ENCODE measurements at regions of chr5 and their contacts with region 1.

Region 1: GRCh38 chr5:169583424-169584204 is at the start of gene SPDL1:
- DNase-seq: peak; percentile 98
- H3K4me3 ChIP-seq: peak within 1 kb of the TSS; percentile 48 to 96 (median 92)
- H3K27ac ChIP-seq: peak within 1 kb of the TSS; percentile 52
- H3K4me1 ChIP-seq: peaks cover 24% of the 10 kb centered on the region
- H3K27me3 ChIP-seq: peaks cover 0 to 4% of the 10 kb centered on the region in 2 experiments
- CTCF ChIP-seq: no peak
- POLR2A ChIP-seq: peak; percentile 92
- total RNA-seq, gene SPDL1: 46.8 and 51.8 TPM in 2 replicates

Region 2: GRCh38 chr5:168268949-168269943 is 1314.4 kb before region 1 on chr5:
- CTCF ChIA-PET with region 1: no interaction called
- POLR2A ChIA-PET with region 1: no interaction called
- dilution Hi-C with region 1: no loop called
- intact Hi-C with region 1: loop called (anchors 2 kb)
- DNase-seq: peak; percentile 87
- H3K4me3 ChIP-seq: peak overlapping the region in 1 of 3 experiments; percentile 3
- H3K27ac ChIP-seq: no peak overlapping the region
- H3K4me1 ChIP-seq: no peaks in the 10 kb centered on the region
- H3K27me3 ChIP-seq: no peaks in the 10 kb centered on the region
- CTCF ChIP-seq: peak; percentile 87 to 88
- POLR2A ChIP-seq: no peak

Region 3: GRCh38 chr5:168679515-168679920 is 904.1 kb before region 1 on chr5:
- CTCF ChIA-PET with region 1: interaction called, 10 read pairs
- POLR2A ChIA-PET with region 1: no interaction called
- dilution Hi-C with region 1: no loop called
- intact Hi-C with region 1: loop called (anchors 1 kb)
- DNase-seq: peak; percentile 75
- H3K4me3 ChIP-seq: no peak overlapping the region
- H3K27ac ChIP-seq: no peak overlapping the region
- H3K4me1 ChIP-seq: peaks cover 3% of the 10 kb centered on the region
- H3K27me3 ChIP-seq: no peaks in the 10 kb centered on the region
- CTCF ChIP-seq: peak; percentile 78 to 87
- POLR2A ChIP-seq: no peak

Region 4: DNA sequence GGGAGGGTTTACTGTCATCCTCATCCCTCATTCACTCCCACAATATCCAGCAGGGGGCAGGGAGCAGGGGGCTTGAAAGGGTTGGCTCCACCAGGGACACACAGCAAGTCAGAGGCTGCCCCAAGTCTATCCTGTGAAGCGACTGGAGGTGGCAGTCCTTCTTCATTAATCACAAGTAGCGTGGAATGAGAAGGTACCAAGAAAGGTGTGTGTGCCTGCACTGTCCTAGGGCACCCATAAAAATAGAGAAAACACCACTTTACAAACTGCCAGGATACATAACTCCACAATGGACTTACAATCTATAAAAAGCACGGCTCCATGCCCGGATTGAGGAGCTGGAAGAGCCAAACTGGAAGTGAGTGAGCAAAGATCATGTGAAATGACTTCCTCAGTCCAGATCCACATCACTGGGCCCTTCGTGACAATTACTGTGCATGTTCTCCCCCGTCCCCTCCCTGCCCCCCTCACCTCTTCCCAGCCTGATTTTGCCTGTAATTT is 466.6 kb before region 1 on chr5:
- CTCF ChIA-PET with region 1: no interaction called
- POLR2A ChIA-PET with region 1: no interaction called
- dilution Hi-C with region 1: no loop called
- intact Hi-C with region 1: loop called (anchors 1 kb)
- DNase-seq: peak; percentile 14
- H3K4me3 ChIP-seq: no peak overlapping the region
- H3K27ac ChIP-seq: no peak overlapping the region
- H3K4me1 ChIP-seq: no peaks in the 10 kb centered on the region
- H3K27me3 ChIP-seq: no peaks in the 10 kb centered on the region
- CTCF ChIP-seq: no peak
- POLR2A ChIP-seq: no peak

Region 5: DNA sequence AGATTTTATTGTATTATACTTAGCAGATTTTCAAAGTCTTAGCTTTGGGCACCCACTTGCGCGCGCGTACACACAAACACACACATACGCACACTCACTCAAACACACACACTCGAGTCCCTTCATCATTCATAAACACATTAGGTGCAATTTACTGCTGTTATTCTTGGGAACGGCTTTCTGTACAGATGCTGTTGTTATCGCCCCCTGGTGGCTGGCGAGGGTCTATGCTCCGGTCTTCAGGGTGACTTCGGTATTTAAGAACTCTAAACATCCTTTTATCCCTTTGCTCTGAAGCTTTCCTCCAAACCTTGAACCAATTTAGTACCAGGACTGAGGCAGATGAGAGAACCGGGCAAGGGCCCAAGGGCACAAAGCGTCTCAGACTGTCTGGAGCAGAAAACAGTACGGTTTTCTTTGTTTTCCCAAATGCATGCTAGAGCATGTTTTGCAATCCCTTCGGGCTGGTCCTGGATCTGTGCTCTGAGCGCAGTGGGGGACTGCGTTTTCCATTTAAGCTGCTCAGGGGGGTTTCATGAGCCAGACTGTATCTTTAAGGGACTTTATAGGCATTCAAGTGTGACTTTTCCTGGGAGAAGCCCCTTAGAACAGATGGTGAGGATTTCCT is 281.0 kb before region 1 on chr5:
- CTCF ChIA-PET with region 1: no interaction called
- POLR2A ChIA-PET with region 1: no interaction called
- dilution Hi-C with region 1: no loop called
- intact Hi-C with region 1: loop called (anchors 1 kb)
- DNase-seq: peak; percentile 85
- H3K4me3 ChIP-seq: no peak overlapping the region
- H3K27ac ChIP-seq: no peak overlapping the region
- H3K4me1 ChIP-seq: peaks cover 4% of the 10 kb centered on the region
- H3K27me3 ChIP-seq: peaks cover 21 to 36% of the 10 kb centered on the region in 2 experiments
- CTCF ChIP-seq: peak; percentile 90 to 93
- POLR2A ChIP-seq: no peak

Region 6: GRCh38 chr5:170056561-170057267 is 473.1 kb after region 1 on chr5:
- CTCF ChIA-PET with region 1: no interaction called
- POLR2A ChIA-PET with region 1: no interaction called
- dilution Hi-C with region 1: no loop called
- intact Hi-C with region 1: loop called (anchors 10 kb)
- DNase-seq: peak; percentile 5
- H3K4me3 ChIP-seq: no peak overlapping the region
- H3K27ac ChIP-seq: no peak overlapping the region
- H3K4me1 ChIP-seq: peaks cover 14% of the 10 kb centered on the region
- H3K27me3 ChIP-seq: no peaks in the 10 kb centered on the region
- CTCF ChIP-seq: no peak
- POLR2A ChIP-seq: no peak